Activated CD4-positive, alpha-beta T cell treated with anti-CD3 and anti-CD28 coated beads, Interleukin-2, amount 10 ng/mL, durations not matched to agents 24 days and 14 days (primary cell): ENCODE measurements at regions of chr6 and their contacts with region 1.

Region 1: GRCh38 chr6:73262671-73263569 is at the start of gene KHDC1:
- DNase-seq: peak; percentile 89
- H3K4me3 Mint-ChIP-seq: peak within 1 kb of the TSS; percentile 86
- H3K27ac Mint-ChIP-seq: peak within 1 kb of the TSS; percentile 83
- H3K4me1 Mint-ChIP-seq: peaks cover 29% of the 10 kb centered on the region
- H3K27me3 Mint-ChIP-seq: no peaks in the 10 kb centered on the region
- total RNA-seq, gene KHDC1: 5.1 and 5.2 TPM in 2 replicates

Region 2: DNA sequence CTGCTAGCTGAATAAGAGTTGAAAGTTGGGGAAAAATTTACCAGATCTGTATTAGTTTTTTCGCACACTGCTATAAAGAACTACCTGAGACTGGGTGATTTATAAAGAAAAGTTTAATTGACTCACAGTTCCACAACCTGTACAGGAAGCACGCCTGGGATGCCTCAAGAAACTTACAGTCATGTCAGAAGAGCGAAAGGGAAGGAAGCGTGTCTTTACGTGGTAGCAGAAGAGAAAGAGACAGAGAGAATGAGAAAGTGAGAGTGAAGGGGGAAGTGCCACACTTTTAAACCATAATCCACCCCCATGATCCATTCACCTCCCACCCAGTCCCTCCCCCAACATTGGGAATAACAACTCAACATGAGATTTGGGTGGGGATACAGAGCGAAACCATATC is 117.2 kb before region 1 on chr6:
- intact Hi-C with region 1: no loop called
- DNase-seq: no peak
- H3K4me3 Mint-ChIP-seq: no peak overlapping the region
- H3K27ac Mint-ChIP-seq: no peak overlapping the region
- H3K4me1 Mint-ChIP-seq: peaks cover 3% of the 10 kb centered on the region
- H3K27me3 Mint-ChIP-seq: no peaks in the 10 kb centered on the region

Region 3: GRCh38 chr6:73309769-73310502 is 47.0 kb after region 1 on chr6:
- intact Hi-C with region 1: loop called (anchors 2 kb)
- DNase-seq: peak; percentile 87
- H3K4me3 Mint-ChIP-seq: peak overlapping the region; percentile 98
- H3K27ac Mint-ChIP-seq: peak overlapping the region; percentile 87
- H3K4me1 Mint-ChIP-seq: peaks cover 27% of the 10 kb centered on the region
- H3K27me3 Mint-ChIP-seq: peaks cover 33% of the 10 kb centered on the region